ENCODE measurements at regions of chr3 and their contacts with region 1.

Region 1: DNA sequence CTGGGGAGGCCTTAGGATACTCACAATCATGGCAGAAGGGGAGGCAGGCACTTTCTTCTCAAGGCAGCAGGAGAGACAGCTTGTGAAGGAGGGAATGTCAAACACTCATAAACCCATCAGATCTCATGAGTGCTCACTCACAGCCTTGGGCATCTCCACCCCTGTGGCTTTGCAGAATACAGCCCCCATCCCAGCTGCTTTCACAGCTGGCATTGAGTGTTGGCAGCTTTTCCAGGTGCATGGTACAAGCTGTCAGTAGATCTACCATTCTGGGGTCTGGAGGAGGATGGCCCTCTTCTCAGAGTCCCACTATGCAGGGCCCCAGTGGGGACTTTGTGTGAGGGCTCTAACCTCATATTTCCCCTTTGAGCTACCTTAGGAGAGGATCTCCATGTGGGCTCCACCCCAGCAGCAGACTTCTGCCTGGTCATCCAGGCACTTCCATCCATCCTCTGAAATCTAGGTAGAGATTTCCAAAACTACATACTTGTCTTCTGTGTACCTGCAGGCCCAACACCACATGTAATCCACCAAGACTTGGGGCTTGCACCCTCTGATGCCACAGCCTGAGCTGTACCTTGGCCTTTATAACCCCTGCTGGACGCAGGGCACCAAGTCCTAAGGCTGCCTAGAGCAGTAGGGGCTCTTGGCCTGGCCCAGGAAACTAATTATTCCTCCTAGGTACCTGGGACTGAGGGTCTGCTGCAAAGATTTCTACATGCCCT is 404.2 kb upstream of the EPHA6 start:
- DNase-seq: no peak
- H3K4me3 ChIP-seq: no peak overlapping the region
- H3K27ac ChIP-seq: no peak overlapping the region
- H3K4me1 ChIP-seq: no peaks in the 10 kb centered on the region
- H3K27me3 ChIP-seq: no peaks in the 10 kb centered on the region
- CTCF ChIP-seq: no peak

Region 2: GRCh38 chr3:94967196-94967595 is 1443.0 kb before region 1 on chr3:
- CTCF ChIA-PET with region 1: interaction called, 11 read pairs
- dilution Hi-C with region 1: no loop called
- in situ Hi-C with region 1: no loop called
- intact Hi-C with region 1: no loop called
- DNase-seq: no peak
- H3K4me3 ChIP-seq: no peak overlapping the region
- H3K27ac ChIP-seq: no peak overlapping the region
- H3K4me1 ChIP-seq: no peaks in the 10 kb centered on the region
- H3K27me3 ChIP-seq: no peaks in the 10 kb centered on the region
- CTCF ChIP-seq: no peak